ENCODE measurements at regions of chr13 and their contacts with region 1.

Region 1: DNA sequence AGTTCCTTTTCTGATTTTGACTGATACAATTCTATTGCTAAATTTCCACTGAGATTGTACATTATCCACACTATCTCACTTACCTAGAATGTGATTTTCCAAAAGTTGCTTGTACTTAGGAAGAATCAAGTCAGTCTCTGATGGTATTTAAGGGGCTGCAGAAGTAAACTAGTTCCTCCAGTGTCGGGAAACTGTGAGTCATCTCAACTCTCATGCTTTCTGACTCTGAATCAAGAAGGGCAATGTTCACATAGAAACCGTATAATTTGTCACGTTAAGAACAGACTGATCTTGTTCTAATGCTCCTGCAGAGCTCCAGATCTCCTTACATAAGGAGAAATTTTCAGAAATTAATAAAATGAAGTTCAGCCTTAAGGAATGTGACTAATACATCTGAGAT is 369.3 kb downstream of the KLF5 start:
- DNase-seq: peak; percentile 81
- H3K4me3 Mint-ChIP-seq: peak overlapping the region; percentile 7
- H3K27ac Mint-ChIP-seq: peak overlapping the region; percentile 79
- H3K4me1 Mint-ChIP-seq: peaks cover 36% of the 10 kb centered on the region
- H3K27me3 Mint-ChIP-seq: no peaks in the 10 kb centered on the region
- CTCF ChIP-seq: no peak

Region 2: DNA sequence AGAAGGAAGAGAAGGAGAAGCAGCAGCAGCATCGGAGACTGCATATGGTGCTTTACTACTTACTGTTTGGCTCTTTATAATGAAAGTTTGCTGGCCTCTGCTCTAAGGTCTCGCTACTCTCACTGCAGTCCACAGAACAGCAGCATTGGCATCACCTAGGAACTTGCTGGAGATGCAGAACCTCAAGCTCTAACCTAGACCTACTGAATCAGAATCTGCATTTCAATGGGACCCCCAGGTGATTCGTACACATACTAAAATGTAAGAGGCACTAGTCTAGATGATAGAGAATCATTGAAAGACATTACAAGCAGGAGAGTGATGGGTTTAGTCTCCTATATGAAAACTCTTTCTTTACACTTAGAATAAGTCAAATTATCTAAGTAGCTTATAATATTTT is 98.8 kb before region 1 on chr13:
- CTCF ChIA-PET with region 1: no interaction called
- POLR2A ChIA-PET with region 1: interaction called, 10 read pairs
- intact Hi-C with region 1: no loop called
- DNase-seq: no peak
- H3K4me3 Mint-ChIP-seq: no peak overlapping the region
- H3K27ac Mint-ChIP-seq: no peak overlapping the region
- H3K4me1 Mint-ChIP-seq: peaks cover 22% of the 10 kb centered on the region
- H3K27me3 Mint-ChIP-seq: no peaks in the 10 kb centered on the region
- CTCF ChIP-seq: no peak

Region 3: GRCh38 chr13:73465617-73465971 is 37.5 kb after region 1 on chr13:
- CTCF ChIA-PET with region 1: interaction called, 3 read pairs
- POLR2A ChIA-PET with region 1: interaction called, 25 read pairs
- intact Hi-C with region 1: no loop called
- DNase-seq: peak; percentile 76
- H3K4me3 Mint-ChIP-seq: no peak overlapping the region
- H3K27ac Mint-ChIP-seq: peak overlapping the region; percentile 90
- H3K4me1 Mint-ChIP-seq: peaks cover 15% of the 10 kb centered on the region
- H3K27me3 Mint-ChIP-seq: no peaks in the 10 kb centered on the region
- CTCF ChIP-seq: no peak

Region 4: DNA sequence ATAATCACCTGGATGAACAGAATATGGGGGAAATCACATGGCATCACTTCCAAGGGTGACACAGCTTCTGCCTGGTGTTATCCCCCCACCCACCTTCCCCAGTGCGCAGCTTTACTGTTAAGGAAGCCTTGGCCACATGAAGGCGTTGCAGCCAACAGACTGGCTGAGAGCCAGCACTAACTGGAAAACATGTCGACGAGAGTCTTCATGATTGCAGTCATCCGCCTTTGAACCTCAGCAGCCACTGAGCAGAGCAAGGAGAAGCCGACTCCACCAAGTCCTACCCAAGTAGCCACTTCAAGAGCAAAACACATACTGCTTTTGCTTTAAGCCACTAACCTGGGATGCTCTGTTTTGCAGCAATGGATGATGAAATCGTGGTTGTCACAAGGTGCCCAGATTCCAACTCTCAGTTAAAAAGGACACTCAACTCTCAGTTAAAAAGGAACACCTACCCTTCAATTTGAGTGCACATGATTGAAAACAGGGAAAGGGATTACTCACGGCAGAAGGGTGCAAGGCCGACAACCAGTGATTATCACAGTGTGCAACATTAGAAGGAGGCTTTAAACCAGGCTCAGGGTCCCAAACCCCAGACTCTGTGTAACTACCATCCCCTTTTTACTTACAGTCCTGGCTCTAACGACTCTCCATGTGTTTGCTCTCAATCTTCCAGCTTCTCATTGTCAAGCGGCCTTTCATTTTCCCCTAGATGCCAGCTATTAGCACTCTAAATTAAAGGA is 557.0 kb after region 1 on chr13:
- CTCF ChIA-PET with region 1: no interaction called
- POLR2A ChIA-PET with region 1: no interaction called
- intact Hi-C with region 1: no loop called
- DNase-seq: no peak
- H3K4me3 Mint-ChIP-seq: no peak overlapping the region
- H3K27ac Mint-ChIP-seq: no peak overlapping the region
- H3K4me1 Mint-ChIP-seq: no peaks in the 10 kb centered on the region
- H3K27me3 Mint-ChIP-seq: no peaks in the 10 kb centered on the region
- CTCF ChIP-seq: no peak

Measured in MCF 10A (cell line).